ENCODE measurements at regions of chr6 and their contacts with region 1.

Region 1: DNA sequence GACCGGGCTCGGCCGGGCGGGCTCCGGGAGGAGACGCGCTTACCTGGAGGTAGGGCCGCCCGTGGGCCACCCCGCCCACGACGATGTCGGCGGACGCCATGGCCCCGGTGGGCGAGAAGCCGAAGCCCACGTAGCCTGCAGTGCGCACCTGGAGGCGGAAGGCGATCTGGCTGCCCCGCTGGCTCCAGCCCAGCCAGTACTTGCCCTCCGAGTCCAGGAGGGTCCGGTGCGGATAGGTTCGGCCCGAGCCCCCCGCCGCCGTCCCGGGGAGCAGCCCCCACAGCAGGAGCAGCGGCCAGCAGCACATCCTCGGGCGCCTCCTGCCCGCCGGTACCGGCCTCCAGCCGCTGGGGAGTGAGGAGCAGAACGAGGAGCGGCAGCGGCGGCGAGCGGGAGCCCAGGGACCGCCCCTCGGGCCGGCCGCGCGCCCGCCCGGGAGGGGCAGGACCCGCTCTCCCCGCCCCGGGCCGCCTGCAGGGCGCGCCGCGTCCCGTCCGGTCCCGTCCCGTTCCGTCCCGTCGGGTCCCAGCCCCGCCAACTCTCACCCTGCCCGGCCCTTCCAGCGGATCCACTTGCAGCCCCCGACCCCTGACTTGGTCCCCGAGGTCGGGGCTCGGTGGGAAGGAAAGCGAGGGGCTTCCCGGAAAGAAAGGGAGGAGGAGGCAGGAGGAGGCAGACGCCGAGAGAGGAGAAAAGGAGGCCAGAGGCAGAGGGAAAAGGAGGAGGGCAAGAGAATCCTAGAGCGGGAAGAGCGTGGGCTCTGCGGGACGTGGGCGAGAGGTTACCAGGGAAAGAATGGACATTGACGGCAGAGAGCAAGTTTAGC is at the start of gene MOXD1:
- DNase-seq: peak; percentile 64
- ATAC-seq: peak; percentile 83
- H3K4me3 ChIP-seq: peak within 1 kb of the TSS; percentile 51 to 84 (median 73)
- H3K4me3 Mint-ChIP-seq: peak within 1 kb of the TSS; percentile 88
- H3K27ac ChIP-seq: no peak within 1 kb of the TSS
- H3K27ac Mint-ChIP-seq: peak within 1 kb of the TSS; percentile 76
- H3K4me1 ChIP-seq: peaks cover 13 to 14% of the 10 kb centered on the region in 2 donors
- H3K4me1 Mint-ChIP-seq: peaks cover 24% of the 10 kb centered on the region
- H3K27me3 ChIP-seq: peaks cover 0 to 19% (median 11%) of the 10 kb centered on the region in 4 experiments
- H3K27me3 Mint-ChIP-seq: peaks cover 20% of the 10 kb centered on the region
- CTCF ChIP-seq: no peak
- total RNA-seq, gene MOXD1: 6.7 and 7.0 TPM in 2 replicates

Region 2: GRCh38 chr6:131867744-131868143 is 533.6 kb before region 1 on chr6:
- CTCF ChIA-PET with region 1: no interaction called
- POLR2A ChIA-PET with region 1: no interaction called
- intact Hi-C with region 1: no loop called
- DNase-seq: no peak
- ATAC-seq: no peak
- H3K4me3 ChIP-seq: no peak overlapping the region
- H3K4me3 Mint-ChIP-seq: no peak overlapping the region
- H3K27ac ChIP-seq: no peak overlapping the region
- H3K27ac Mint-ChIP-seq: no peak overlapping the region
- H3K4me1 ChIP-seq: no peaks in the 10 kb centered on the region
- H3K4me1 Mint-ChIP-seq: no peaks in the 10 kb centered on the region
- H3K27me3 ChIP-seq: no peaks in the 10 kb centered on the region
- H3K27me3 Mint-ChIP-seq: no peaks in the 10 kb centered on the region
- CTCF ChIP-seq: no peak

Region 3: GRCh38 chr6:132443206-132443605 is 41.9 kb after region 1 on chr6:
- CTCF ChIA-PET with region 1: no interaction called
- POLR2A ChIA-PET with region 1: no interaction called
- intact Hi-C with region 1: loop called (anchors 5 kb)
- DNase-seq: no peak
- ATAC-seq: no peak
- H3K4me3 ChIP-seq: no peak overlapping the region
- H3K4me3 Mint-ChIP-seq: no peak overlapping the region
- H3K27ac ChIP-seq: no peak overlapping the region
- H3K27ac Mint-ChIP-seq: no peak overlapping the region
- H3K4me1 ChIP-seq: no peaks in the 10 kb centered on the region
- H3K4me1 Mint-ChIP-seq: peaks cover 7% of the 10 kb centered on the region
- H3K27me3 ChIP-seq: no peaks in the 10 kb centered on the region
- H3K27me3 Mint-ChIP-seq: no peaks in the 10 kb centered on the region
- CTCF ChIP-seq: no peak

Measured in B cell (primary cell).